H1 (cell line): ENCODE measurements at regions of chr22 and their contacts with region 1.

Region 1: DNA sequence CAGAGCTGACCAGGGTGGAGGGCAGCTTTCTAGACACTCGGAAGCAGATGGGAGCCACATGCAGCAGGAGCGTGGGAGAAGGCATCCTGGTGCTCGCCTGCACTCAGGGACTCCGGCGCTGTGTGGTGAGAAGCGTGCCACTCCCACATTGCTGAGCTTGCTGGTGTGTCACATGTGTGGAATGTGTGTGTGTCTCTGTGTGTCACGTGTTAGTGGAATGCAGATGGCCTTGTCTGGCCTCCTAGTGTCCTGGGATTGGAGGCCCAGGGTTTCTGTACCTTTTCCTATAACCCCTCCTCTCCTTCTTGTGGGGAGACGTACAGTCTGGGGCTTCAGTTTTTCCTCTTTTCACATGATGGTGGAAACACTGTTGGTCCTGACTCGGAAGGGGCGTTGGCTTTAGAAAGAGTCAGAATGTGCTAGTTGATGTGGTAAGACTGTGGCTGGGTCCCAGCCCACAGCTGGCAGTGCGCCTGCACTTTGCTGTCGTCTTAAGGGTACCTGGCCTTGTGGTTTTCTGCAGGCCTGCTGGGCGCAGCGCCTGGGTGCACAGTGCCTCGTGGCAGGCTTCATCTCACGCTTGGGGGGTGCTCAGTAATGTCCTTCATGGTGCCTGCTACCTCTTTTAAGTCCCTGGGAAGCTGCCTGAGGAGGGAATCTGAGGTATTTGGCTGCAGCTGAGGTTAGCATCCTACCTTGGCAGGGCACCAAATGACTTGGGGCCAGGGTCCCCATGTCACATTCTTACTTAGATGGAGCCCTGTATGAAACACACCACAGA is 61.8 kb downstream of the MED15 start:
- DNase-seq: no peak
- H3K4me3 ChIP-seq: no peak overlapping the region
- H3K27ac ChIP-seq: no peak overlapping the region
- H3K4me1 ChIP-seq: no peaks in the 10 kb centered on the region
- H3K27me3 ChIP-seq: no peaks in the 10 kb centered on the region
- CTCF ChIP-seq: no peak
- EP300 ChIP-seq: no peak
- POLR2A ChIP-seq: no peak
- RAD21 ChIP-seq: no peak

Region 2: GRCh38 chr22:20550821-20551744 is 18.1 kb before region 1 on chr22:
- CTCF ChIA-PET with region 1: interaction called, 40 read pairs
- POLR2A ChIA-PET with region 1: interaction called, 5 read pairs
- DNase-seq: no peak
- H3K4me3 ChIP-seq: no peak overlapping the region
- H3K27ac ChIP-seq: no peak overlapping the region
- H3K4me1 ChIP-seq: peaks cover 2 to 12% (median 5%) of the 10 kb centered on the region in 4 experiments; a peak in 6 of 7 replicates
- H3K27me3 ChIP-seq: no peaks in the 10 kb centered on the region
- CTCF ChIP-seq: no peak
- EP300 ChIP-seq: no peak
- POLR2A ChIP-seq: no peak
- RAD21 ChIP-seq: no peak

Region 3: DNA sequence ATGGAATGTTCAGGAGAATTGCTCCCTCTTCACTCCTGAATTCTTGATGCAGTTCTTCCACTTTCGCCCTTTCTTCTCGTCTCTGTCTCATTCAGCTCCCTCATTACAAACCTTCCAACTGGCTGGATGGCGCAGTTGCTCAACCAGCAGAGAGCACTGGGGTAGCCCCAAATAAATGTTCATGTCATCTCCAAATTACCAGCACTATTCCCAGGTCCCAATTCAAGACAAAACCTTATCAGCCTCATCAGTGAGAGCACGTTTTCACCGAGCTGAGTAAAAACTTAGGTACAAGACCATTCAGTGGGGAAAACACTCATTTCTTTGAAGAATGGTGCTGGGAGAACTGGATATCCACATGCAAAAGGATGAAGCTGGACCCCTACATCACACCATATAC is 58.3 kb after region 1 on chr22:
- CTCF ChIA-PET with region 1: no interaction called
- POLR2A ChIA-PET with region 1: no interaction called
- DNase-seq: no peak
- H3K4me3 ChIP-seq: no peak overlapping the region
- H3K27ac ChIP-seq: no peak overlapping the region
- H3K4me1 ChIP-seq: no peaks in the 10 kb centered on the region
- H3K27me3 ChIP-seq: no peaks in the 10 kb centered on the region; a peak in 1 of 7 replicates
- CTCF ChIP-seq: no peak
- EP300 ChIP-seq: no peak
- POLR2A ChIP-seq: no peak
- RAD21 ChIP-seq: no peak

Region 4: DNA sequence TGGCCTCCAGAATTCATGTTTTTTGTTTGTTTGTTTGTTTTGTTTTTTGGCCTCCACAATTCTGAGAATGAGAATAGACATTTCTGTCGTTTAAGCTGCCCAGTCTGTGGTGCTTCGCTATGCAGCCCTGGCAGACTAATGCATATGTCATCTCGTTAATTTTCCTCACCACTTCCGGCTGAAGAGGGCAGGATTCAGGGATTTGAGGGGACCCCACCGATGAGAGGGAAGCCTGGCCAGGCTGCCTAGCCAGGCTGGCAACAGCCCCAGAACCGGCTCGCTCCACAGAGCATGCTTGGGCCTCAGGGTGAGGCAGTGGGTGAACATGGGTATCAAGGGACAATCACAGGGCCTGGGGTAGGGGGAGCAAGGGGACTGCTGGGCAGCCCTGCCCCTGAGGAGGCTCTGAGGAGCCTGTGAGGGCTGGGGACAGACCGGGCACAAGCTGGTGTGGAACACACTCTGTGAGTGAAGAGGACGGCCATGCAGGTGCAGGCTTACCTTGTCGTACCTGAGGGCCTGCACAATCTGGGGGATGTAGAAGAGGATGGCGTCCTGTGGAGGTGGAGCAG is 156.9 kb after region 1 on chr22:
- CTCF ChIA-PET with region 1: no interaction called
- POLR2A ChIA-PET with region 1: no interaction called
- DNase-seq: no peak
- H3K4me3 ChIP-seq: no peak overlapping the region
- H3K27ac ChIP-seq: no peak overlapping the region
- H3K4me1 ChIP-seq: no peaks in the 10 kb centered on the region
- H3K27me3 ChIP-seq: no peaks in the 10 kb centered on the region
- CTCF ChIP-seq: no peak
- EP300 ChIP-seq: no peak
- POLR2A ChIP-seq: no peak
- RAD21 ChIP-seq: no peak